ENCODE measurements at regions of chr1 and their contacts with region 1.

Region 1: DNA sequence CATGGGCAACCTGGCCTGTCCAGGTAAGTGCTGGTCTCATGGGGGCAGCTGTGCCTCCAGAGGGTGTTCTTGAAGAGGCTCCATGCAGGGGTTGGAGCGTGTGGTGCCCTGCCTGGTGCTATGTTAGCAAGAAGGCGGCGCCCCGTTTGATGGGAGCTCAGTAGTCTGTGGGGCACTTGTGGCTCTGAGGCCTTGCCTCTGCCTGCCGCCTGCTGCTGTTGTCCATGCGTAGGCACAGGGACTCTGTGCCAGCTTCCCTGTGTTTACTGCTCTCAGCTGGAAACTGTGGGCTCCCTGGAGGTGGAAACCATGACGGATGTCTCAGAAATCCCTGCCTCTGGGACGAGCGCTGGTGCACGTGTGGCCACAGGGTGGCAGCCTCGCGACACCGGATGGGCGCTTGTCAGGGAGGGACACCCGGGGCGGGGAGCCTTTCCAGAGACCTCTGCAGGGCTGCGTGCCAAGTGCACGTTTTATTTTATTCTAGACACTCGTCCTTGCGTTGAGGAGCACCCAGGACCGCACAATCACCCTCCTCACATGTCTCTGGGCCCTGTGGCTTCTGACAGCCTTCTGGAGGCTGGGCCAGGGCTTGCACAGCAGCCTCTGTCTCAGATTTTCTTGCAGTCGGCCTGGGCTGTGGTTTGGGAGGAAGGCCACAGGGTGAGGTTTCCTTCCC is 27.1 kb downstream of the SNAP47 start:
- DNase-seq: peak; percentile 47 to 92
- H3K4me3 ChIP-seq: no peak overlapping the region
- H3K27ac ChIP-seq: no peak overlapping the region
- H3K4me1 ChIP-seq: peaks cover 0 to 5% (median under 1%) of the 10 kb centered on the region in 4 experiments; a peak in 3 of 7 replicates
- H3K27me3 ChIP-seq: no peaks in the 10 kb centered on the region
- CTCF ChIP-seq: peak; percentile 94 to 98 (median 95)
- EP300 ChIP-seq: no peak
- POLR2A ChIP-seq: no peak
- RAD21 ChIP-seq: peak; percentile 96 to 99

Region 2: DNA sequence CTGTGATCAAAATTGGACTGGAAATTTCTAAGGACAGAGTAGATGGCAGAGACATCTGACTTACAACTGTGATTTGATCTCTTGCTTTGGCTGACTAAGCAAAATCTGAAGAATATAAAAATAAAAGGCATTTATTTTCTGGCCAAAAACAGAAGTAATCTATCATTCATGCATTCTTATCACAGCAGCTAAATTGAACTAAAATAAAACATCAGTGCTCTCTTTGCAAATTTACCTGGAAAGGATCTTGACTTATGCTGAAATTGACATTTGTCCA is 280.4 kb before region 1 on chr1:
- CTCF ChIA-PET with region 1: interaction called, 14 read pairs
- POLR2A ChIA-PET with region 1: no interaction called
- DNase-seq: no peak
- H3K4me3 ChIP-seq: no peak overlapping the region
- H3K27ac ChIP-seq: no peak overlapping the region
- H3K4me1 ChIP-seq: no peaks in the 10 kb centered on the region
- H3K27me3 ChIP-seq: no peaks in the 10 kb centered on the region
- CTCF ChIP-seq: no peak
- EP300 ChIP-seq: no peak
- POLR2A ChIP-seq: no peak
- RAD21 ChIP-seq: no peak

Region 3: GRCh38 chr1:227621211-227621610 is 141.2 kb before region 1 on chr1:
- CTCF ChIA-PET with region 1: no interaction called
- POLR2A ChIA-PET with region 1: no interaction called
- DNase-seq: peak in 1 of 2 experiments; percentile 2
- H3K4me3 ChIP-seq: no peak overlapping the region
- H3K27ac ChIP-seq: no peak overlapping the region
- H3K4me1 ChIP-seq: peaks cover 0 to 2% (median 0%) of the 10 kb centered on the region in 4 experiments; a peak in 1 of 7 replicates
- H3K27me3 ChIP-seq: no peaks in the 10 kb centered on the region
- CTCF ChIP-seq: no peak
- EP300 ChIP-seq: no peak
- POLR2A ChIP-seq: no peak
- RAD21 ChIP-seq: no peak

Region 4: GRCh38 chr1:227685807-227686206 is 76.6 kb before region 1 on chr1:
- CTCF ChIA-PET with region 1: no interaction called
- POLR2A ChIA-PET with region 1: no interaction called
- DNase-seq: no peak
- H3K4me3 ChIP-seq: no peak overlapping the region
- H3K27ac ChIP-seq: no peak overlapping the region
- H3K4me1 ChIP-seq: no peaks in the 10 kb centered on the region
- H3K27me3 ChIP-seq: no peaks in the 10 kb centered on the region; a peak in 1 of 7 replicates
- CTCF ChIP-seq: no peak
- EP300 ChIP-seq: no peak
- POLR2A ChIP-seq: no peak
- RAD21 ChIP-seq: no peak

Region 5: GRCh38 chr1:227742738-227743715 is 19.3 kb before region 1 on chr1:
- CTCF ChIA-PET with region 1: interaction called, 12 read pairs
- POLR2A ChIA-PET with region 1: no interaction called
- DNase-seq: no peak
- H3K4me3 ChIP-seq: no peak overlapping the region
- H3K27ac ChIP-seq: no peak overlapping the region
- H3K4me1 ChIP-seq: peaks cover 0 to 4% (median 0%) of the 10 kb centered on the region in 4 experiments; a peak in 1 of 7 replicates
- H3K27me3 ChIP-seq: no peaks in the 10 kb centered on the region
- CTCF ChIP-seq: peak in 2 of 3 experiments; percentile 43; a peak in 3 of 4 replicates
- EP300 ChIP-seq: no peak
- POLR2A ChIP-seq: no peak
- RAD21 ChIP-seq: peak in 1 of 2 experiments; percentile 12; a peak in 2 of 4 replicates

Region 6: DNA sequence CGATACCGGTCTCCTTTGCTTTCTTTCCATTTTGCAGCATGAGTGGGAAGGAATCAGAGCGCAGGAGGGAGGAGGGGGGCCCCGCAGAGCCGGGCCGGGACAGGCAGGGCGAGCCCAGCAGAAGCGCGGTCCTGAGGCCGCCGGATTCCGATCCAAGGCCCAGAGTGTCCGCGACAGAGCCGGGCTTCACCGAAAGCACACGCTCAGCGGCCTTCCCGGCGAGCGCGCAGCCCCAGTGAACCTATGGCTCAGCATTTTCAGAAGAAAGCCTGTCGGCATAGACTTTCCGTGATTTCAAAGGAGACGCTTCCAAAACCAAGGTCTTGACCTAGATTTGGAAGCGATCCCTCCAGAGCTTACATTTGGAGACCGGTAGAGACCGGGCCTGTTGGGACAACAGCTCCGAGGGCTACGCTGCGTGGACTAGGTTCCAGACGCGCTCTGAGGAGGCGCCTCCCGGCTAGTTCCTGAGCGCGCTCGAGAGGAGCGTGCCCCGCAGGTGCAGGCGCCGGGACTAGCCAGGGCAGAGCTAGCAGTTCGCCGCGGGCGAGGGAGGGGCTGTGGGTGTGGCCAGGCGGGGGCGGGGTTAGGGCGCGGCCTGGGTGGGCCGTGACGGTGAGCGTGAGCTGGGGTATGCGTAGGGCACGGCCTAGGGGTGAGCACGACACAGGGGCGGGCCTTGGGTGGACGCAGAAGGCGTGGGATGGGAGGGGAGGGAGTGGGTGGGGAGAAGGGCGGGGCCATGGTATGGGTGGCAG is 25.3 kb after region 1 on chr1:
- CTCF ChIA-PET with region 1: interaction called, 19 read pairs
- POLR2A ChIA-PET with region 1: no interaction called
- DNase-seq: peak; percentile 86 to 91
- H3K4me3 ChIP-seq: peak overlapping the region; percentile 52 to 69 (median 60)
- H3K27ac ChIP-seq: no peak overlapping the region
- H3K4me1 ChIP-seq: peaks cover 0 to 15% (median 9%) of the 10 kb centered on the region in 4 experiments; a peak in 5 of 7 replicates
- H3K27me3 ChIP-seq: peaks cover 4 to 37% (median 27%) of the 10 kb centered on the region in 4 experiments; a peak in 6 of 7 replicates
- CTCF ChIP-seq: no peak
- EP300 ChIP-seq: no peak
- POLR2A ChIP-seq: no peak
- RAD21 ChIP-seq: no peak

Region 7: DNA sequence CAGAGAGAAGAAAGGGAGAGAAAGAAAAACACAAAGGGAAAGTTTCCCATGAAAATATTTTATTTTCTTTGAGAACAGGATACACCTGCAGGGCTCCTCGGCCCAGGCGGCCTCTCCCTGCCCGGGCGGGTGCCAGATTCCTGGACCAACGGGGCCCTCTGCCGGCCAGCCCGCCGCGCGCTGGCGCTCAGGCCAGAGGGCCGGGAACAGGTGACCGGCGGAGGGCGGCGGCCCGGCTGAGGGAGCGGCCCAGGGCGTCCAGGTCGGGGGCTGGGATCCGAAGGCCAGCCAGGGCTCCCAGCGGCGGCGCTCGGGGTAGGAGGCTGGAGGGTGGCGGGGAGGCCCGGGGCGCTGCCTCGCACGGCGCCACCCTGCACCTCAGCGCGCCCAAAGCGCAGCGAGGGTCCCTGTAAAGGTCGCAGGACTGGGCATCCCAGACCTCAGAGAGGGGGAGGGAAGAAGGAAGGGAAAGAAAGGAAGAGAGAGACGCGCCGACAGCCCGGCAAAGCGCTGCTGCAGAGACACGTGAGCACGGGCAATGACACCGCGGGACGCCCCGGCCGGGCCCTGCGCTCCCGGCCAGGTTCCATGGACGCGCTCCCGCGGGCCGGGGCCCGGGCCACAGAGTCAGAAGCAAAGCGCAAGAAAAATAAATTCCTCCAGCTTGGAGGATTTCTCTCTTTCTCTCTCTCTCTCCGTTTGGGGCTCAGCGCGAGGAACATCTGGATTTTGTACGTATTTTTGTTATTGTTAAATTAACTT is 184.4 kb after region 1 on chr1:
- CTCF ChIA-PET with region 1: interaction called, 44 read pairs
- POLR2A ChIA-PET with region 1: interaction called, 5 read pairs
- DNase-seq: peak in 1 of 2 experiments; percentile 92
- H3K4me3 ChIP-seq: peak overlapping the region; percentile 48 to 72 (median 65)
- H3K27ac ChIP-seq: no peak overlapping the region
- H3K4me1 ChIP-seq: peaks cover 0 to 19% (median 10%) of the 10 kb centered on the region in 4 experiments; a peak in 5 of 7 replicates
- H3K27me3 ChIP-seq: peaks cover 9 to 22% (median 18%) of the 10 kb centered on the region in 4 experiments
- CTCF ChIP-seq: peak; percentile 66 to 94 (median 80)
- EP300 ChIP-seq: peak in 1 of 2 experiments; percentile 94; a peak in 1 of 3 replicates
- POLR2A ChIP-seq: no peak
- RAD21 ChIP-seq: peak; percentile 90 to 97